MCF 10A (cell line): ENCODE measurements at regions of chr5 and their contacts with region 1.

Region 1: DNA sequence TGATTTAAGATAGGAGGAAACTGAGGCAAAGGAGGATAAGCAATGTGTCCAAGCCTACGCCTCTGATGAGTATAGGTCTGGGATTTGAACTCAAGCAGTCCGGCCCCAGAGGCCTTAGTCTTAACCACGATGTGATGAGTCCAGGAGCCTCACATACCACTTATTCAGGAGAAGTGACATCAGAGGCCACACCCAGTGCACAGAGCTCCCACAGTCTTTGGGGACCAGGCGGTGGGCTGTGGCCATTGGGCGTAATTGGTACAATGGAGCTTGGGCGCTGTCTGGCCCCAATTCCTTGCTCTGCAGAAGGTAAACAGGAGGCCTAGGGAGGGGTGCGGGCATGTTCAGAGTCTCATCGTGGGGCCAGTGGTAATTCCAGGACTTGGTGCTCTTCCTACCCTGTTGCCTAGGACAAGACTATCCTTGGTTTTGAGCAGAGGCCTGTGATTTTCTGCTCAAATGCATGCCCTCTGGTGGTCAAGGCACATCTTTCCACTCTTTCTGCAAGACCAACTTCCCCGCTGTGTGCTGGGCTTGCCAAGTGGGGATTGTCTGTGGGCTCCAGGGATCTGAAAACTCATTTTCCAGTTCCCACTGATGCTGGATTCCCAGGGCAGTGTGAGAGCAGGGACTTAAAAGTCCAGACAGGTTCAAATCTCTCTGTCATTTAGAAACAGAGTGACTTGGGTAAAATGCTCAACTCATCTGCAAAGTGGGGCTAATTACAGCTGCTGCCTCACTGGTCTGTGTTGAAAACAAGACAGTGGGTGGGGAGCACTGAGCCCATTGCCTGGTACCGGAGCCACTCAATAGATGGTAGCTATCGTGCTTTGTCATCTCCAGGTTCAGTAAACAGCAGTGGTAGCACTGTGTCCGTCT is 15.8 kb downstream of the NDST1 start:
- DNase-seq: peak; percentile 81
- H3K4me3 Mint-ChIP-seq: no peak overlapping the region
- H3K27ac Mint-ChIP-seq: no peak overlapping the region
- H3K4me1 Mint-ChIP-seq: peaks cover 43% of the 10 kb centered on the region
- H3K27me3 Mint-ChIP-seq: no peaks in the 10 kb centered on the region
- CTCF ChIP-seq: peak; percentile 85

Region 2: DNA sequence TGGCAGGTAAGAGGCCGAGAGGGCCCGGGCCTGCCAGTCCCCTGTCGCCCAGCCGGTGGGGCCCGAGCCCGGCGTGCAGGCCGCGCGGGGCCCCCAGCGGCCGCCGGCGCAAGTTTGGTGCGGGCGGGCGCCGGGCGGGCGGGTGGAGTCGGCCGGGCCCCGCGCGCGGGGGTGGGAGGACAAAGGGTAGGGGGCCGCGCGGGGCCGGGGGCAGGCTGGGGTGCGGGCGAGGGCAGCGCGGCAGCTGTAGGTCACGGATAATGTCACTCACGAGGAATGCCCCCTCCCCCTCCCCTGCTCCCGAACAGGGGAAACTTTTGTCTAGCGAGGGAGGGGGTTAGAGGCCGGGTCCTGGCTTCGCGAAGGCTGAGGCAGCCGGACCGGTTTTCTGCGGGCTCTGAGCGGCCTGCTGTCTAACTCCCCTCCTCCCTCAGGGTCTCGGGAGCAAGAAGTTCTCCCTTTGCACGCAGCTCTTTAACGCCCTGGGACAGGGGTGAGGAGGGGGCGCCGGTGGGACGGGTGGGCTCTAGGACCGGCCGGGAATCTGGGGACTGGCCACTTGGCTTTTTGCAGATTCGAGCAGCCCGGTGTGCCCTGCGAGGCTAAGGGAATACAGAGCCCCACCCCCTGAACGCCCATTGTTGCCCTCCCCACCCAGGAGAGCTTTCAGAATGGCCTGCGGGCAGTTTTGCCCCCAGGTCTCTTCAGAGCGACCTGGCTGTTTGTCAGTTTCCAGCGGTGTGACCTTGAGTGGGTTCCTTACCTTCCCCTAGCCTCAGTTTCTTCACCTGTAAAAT is 37.1 kb before region 1 on chr5:
- CTCF ChIA-PET with region 1: interaction called, 134 read pairs
- POLR2A ChIA-PET with region 1: interaction called, 10 read pairs
- intact Hi-C with region 1: loop called (anchors 1 kb)
- DNase-seq: peak; percentile 51
- H3K4me3 Mint-ChIP-seq: peak overlapping the region; percentile 72
- H3K27ac Mint-ChIP-seq: peak overlapping the region; percentile 63
- H3K4me1 Mint-ChIP-seq: peaks cover 43% of the 10 kb centered on the region
- H3K27me3 Mint-ChIP-seq: no peaks in the 10 kb centered on the region
- CTCF ChIP-seq: peak; percentile 13

Region 3: DNA sequence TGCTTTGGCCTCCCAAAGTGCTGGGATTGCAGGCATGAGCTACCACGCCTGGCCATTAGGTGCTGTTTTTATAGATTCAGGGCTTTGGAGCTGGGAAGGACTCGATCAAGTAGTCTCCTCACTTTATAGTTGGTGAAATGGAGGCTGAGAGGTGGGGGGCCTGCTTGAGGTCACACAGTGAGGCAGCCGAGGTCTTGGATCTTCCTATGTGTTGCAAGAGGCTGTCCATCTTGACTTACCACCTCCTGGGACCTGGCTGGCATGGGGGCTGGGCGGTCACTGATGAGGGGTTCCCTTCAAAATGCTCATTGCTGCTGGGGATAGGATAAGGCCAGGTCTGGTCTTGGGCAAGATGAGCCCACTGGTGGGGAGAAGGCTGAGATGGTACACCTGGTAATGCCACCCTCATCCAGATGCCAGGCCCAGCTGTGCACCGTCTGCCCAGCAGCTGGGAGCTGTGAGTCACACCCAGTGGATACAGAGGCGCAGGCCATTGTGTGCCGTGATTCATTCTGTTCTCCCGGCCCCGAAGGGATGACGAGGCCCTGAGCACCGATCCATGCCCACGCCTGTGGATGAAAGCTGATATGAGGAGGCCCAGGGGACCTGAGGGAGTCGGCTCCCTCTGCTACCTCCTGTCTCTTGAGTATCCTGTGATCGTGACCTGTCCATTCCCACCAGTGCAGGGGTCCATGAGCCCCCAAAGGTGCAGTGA is 26.3 kb before region 1 on chr5:
- CTCF ChIA-PET with region 1: interaction called, 134 read pairs
- POLR2A ChIA-PET with region 1: interaction called, 45 read pairs
- intact Hi-C with region 1: no loop called
- DNase-seq: peak; percentile 99
- H3K4me3 Mint-ChIP-seq: peak overlapping the region; percentile 70
- H3K27ac Mint-ChIP-seq: peak overlapping the region; percentile 94
- H3K4me1 Mint-ChIP-seq: peaks cover 83% of the 10 kb centered on the region
- H3K27me3 Mint-ChIP-seq: no peaks in the 10 kb centered on the region
- CTCF ChIP-seq: peak; percentile 11

Region 4: GRCh38 chr5:150503977-150504620 is 19.6 kb before region 1 on chr5:
- CTCF ChIA-PET with region 1: interaction called, 39 read pairs
- POLR2A ChIA-PET with region 1: interaction called, 45 read pairs
- intact Hi-C with region 1: no loop called
- DNase-seq: peak; percentile 58
- H3K4me3 Mint-ChIP-seq: no peak overlapping the region
- H3K27ac Mint-ChIP-seq: peak overlapping the region; percentile 72
- H3K4me1 Mint-ChIP-seq: peaks cover 62% of the 10 kb centered on the region
- H3K27me3 Mint-ChIP-seq: no peaks in the 10 kb centered on the region
- CTCF ChIP-seq: no peak

Region 5: GRCh38 chr5:150511578-150512367 is 11.9 kb before region 1 on chr5:
- CTCF ChIA-PET with region 1: interaction called, 28 read pairs
- POLR2A ChIA-PET with region 1: interaction called, 4 read pairs
- intact Hi-C with region 1: no loop called
- DNase-seq: peak; percentile 64
- H3K4me3 Mint-ChIP-seq: peak overlapping the region; percentile 51
- H3K27ac Mint-ChIP-seq: peak overlapping the region; percentile 78
- H3K4me1 Mint-ChIP-seq: peaks cover 59% of the 10 kb centered on the region
- H3K27me3 Mint-ChIP-seq: no peaks in the 10 kb centered on the region
- CTCF ChIP-seq: no peak

Region 6: GRCh38 chr5:150538007-150538917 is 14.6 kb after region 1 on chr5:
- CTCF ChIA-PET with region 1: interaction called, 33 read pairs
- POLR2A ChIA-PET with region 1: interaction called, 10 read pairs
- intact Hi-C with region 1: no loop called
- DNase-seq: peak; percentile 50
- H3K4me3 Mint-ChIP-seq: no peak overlapping the region
- H3K27ac Mint-ChIP-seq: peak overlapping the region; percentile 10
- H3K4me1 Mint-ChIP-seq: peaks cover 36% of the 10 kb centered on the region
- H3K27me3 Mint-ChIP-seq: no peaks in the 10 kb centered on the region
- CTCF ChIP-seq: no peak